ENCODE measurements at regions of chr1 and their contacts with region 1.

Region 1: GRCh38 chr1:226827968-226828513 is 42.4 kb upstream of the PSEN2 start:
- DNase-seq: peak; percentile 91
- H3K4me3 Mint-ChIP-seq: no peak overlapping the region
- H3K27ac Mint-ChIP-seq: peak overlapping the region; percentile 89
- H3K4me1 Mint-ChIP-seq: peaks cover 32% of the 10 kb centered on the region
- H3K27me3 Mint-ChIP-seq: peaks cover 5% of the 10 kb centered on the region

Region 2: GRCh38 chr1:226547754-226548191 is 280.3 kb before region 1 on chr1:
- intact Hi-C with region 1: loop called (anchors 1 kb)
- DNase-seq: peak; percentile 11
- H3K4me3 Mint-ChIP-seq: no peak overlapping the region
- H3K27ac Mint-ChIP-seq: no peak overlapping the region
- H3K4me1 Mint-ChIP-seq: peaks cover 5% of the 10 kb centered on the region
- H3K27me3 Mint-ChIP-seq: peaks cover 73% of the 10 kb centered on the region

Region 3: DNA sequence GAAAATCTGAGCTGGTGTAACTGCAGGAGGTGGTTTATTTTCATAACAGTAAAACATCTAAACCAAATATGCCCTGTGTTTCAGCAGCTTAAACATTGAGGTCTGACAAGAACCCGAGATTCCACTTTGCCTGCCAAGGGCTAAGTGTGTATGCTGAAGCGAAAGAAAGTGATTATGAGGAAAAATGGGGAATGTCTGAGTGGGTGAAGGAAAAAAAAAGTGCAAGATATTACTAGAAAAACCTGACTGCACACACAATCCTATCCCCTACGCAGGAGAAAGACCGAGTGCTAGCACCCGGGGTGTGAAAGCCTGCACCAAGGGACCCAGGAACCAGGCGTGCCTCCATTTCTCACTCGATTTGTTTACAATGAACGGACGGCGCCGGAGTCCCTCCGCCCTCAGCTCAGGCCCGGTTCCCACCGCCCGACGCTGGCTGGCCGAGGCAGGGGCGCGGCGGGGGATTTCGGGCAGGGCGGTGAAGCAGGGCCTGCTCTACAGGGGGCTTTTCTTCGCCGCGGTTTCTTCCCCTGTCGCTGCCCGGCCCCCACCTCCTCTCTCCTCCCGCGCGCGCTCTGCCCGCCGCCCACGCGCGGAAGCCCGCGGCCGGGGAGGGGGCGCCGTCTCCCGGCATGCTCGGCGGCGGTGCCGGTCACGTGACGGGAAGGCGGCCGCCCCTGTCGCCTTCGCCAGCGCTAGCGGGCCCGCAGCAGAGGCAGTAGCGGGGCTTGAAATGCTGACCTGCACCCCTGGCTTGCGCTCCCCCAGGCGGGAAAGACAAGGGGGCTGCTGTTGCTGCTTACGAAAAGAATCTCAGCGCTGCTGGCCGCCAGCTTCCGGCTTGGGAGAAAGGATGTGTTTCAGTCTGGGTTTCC is 124.8 kb before region 1 on chr1:
- intact Hi-C with region 1: loop called (anchors 2 kb)
- DNase-seq: peak; percentile 81
- H3K4me3 Mint-ChIP-seq: peak overlapping the region; percentile 77
- H3K27ac Mint-ChIP-seq: peak overlapping the region; percentile 89
- H3K4me1 Mint-ChIP-seq: peaks cover 57% of the 10 kb centered on the region
- H3K27me3 Mint-ChIP-seq: no peaks in the 10 kb centered on the region

Region 4: GRCh38 chr1:226717256-226717909 is 110.7 kb before region 1 on chr1:
- intact Hi-C with region 1: no loop called
- DNase-seq: no peak
- H3K4me3 Mint-ChIP-seq: peak overlapping the region; percentile 12
- H3K27ac Mint-ChIP-seq: peak overlapping the region; percentile 24
- H3K4me1 Mint-ChIP-seq: peaks cover 70% of the 10 kb centered on the region
- H3K27me3 Mint-ChIP-seq: no peaks in the 10 kb centered on the region

Region 5: DNA sequence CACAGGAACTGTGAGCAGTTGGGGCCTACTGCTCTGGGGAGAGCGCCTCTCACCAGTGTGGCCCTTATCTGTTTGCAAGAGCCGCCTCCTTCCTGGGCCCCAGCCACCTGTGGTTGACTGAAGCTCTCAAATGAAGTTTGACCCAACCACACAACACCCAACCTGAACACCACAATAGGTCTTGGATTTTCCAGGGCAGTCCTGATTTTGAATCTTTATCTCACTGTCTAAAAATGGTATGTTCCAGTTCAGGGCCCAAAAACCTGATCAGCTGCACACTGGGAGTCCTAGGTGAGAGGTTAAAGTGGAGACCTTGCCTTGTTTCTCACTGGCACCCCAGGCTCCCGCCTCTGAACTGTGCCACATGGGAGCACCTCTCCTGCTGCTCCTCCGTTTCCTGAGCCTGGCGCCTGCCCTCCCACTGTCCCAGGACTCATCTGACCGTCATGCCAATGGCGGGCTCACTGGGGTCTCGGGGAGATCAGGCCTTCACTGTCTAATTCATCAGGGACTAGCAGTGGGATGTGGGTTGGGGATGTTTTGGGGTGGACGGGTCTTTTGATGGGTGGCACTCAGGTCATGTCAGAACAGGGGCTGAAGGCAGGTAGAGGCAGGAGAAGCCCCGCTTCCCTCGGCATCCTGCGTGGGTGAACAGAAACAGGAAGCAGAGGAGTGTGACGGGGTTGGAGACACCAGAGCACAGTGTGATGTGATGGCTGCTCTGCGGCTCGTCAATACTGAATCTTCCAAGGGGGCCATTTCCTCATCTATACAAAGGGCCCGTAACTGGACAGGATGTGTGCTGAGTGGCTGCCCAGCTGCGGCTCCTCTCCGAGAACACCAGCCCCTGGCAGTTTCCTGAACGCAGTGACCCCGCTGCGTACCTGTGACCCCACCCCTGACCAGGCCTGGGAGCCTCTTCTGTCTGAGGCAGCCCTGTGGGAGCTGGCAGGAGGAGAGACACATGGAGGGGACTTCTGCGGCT is 29.3 kb before region 1 on chr1:
- intact Hi-C with region 1: loop called (anchors 2 kb)
- DNase-seq: peak; percentile 63
- H3K4me3 Mint-ChIP-seq: peak overlapping the region; percentile 68
- H3K27ac Mint-ChIP-seq: peak overlapping the region; percentile 88
- H3K4me1 Mint-ChIP-seq: peaks cover 26% of the 10 kb centered on the region
- H3K27me3 Mint-ChIP-seq: peaks cover 16% of the 10 kb centered on the region

Region 6: DNA sequence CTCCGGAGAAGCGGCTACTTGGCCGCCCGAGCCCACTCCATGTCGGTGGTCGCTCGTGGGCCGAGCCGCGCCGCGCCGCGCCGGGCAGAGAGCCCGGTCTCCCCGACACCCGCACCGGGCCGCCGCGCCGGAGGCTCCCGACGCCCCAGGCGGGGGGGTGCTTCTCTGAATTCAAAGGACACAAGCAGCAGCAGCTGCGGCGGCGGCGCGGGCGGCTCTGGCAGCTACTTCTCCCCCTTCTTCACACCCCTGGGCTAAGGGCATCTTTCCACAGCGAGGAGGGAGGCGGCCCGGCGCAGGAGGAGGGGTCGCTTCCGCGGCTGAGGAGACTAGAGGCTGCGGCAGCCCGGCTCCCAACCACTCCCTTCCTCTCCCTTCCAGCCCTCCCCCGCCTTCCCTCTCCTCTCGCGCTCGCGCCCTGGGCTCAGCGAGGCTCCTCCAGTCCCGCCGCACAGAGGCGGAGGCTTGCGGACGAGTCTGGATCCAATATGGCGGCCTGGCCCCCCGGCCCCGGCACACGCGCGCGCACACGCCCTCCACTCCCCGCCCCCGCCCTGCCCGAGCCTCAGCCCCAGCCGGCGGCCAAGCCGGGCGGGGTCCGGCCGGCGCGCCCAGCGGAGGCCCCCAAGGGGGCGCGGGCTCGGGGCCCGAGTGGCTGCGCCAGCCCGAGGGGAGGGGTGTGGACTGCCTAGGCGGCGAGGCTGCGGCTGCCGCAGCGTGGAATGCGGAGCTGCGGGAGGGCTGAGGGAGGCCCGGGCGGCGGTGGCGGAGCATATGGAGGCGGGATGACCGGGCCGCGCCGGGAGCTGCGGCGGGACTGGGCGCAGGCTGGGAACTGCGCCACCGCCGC is 490.2 kb after region 1 on chr1 and contains the start of gene CDC42BPA:
- intact Hi-C with region 1: loop called (anchors 5 kb)
- DNase-seq: peak; percentile 7
- H3K4me3 Mint-ChIP-seq: peak within 1 kb of the TSS; percentile 81
- H3K27ac Mint-ChIP-seq: peak within 1 kb of the TSS; percentile 12
- H3K4me1 Mint-ChIP-seq: peaks cover 20% of the 10 kb centered on the region
- H3K27me3 Mint-ChIP-seq: peaks cover 64% of the 10 kb centered on the region
- total RNA-seq, gene CDC42BPA: 1.0 and 1.9 TPM in 2 replicates